ENCODE measurements at regions of chr16 and their contacts with region 1.

Region 1: GRCh38 chr16:361872-362701 is 8.3 kb downstream of the MRPL28 start:
- DNase-seq: peak; percentile 70
- H3K4me3 ChIP-seq: no peak overlapping the region
- H3K27ac ChIP-seq: no peak overlapping the region
- H3K4me1 ChIP-seq: no peaks in the 10 kb centered on the region
- H3K27me3 ChIP-seq: no peaks in the 10 kb centered on the region
- CTCF ChIP-seq: peak; percentile 65 to 83
- POLR2A ChIP-seq: no peak

Region 2: DNA sequence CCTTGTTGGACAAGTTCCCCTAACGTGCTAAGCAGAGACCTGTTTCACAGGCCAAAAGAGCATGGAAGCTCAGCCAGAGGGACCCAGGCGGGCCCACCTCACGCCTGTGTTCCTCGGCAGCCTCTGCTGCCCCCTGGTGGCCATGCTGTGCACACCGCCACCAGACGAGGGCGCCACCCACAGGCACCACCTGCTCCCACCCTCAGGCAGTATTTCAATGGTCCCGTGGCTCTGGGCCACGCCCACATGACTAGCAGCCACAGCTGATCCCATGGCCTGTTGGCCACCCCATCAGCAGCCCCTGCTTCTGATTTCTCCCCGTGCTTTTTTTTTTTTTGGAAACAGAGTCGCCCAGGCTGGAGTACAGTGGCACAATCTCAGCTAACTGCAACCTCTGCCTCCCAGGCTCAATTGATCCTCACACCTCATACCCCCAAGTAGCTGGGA is 265.1 kb before region 1 on chr16:
- CTCF ChIA-PET with region 1: interaction called, 130 read pairs
- POLR2A ChIA-PET with region 1: no interaction called
- dilution Hi-C with region 1: no loop called
- intact Hi-C with region 1: no loop called
- DNase-seq: peak; percentile 87
- H3K4me3 ChIP-seq: no peak overlapping the region
- H3K27ac ChIP-seq: no peak overlapping the region
- H3K4me1 ChIP-seq: no peaks in the 10 kb centered on the region
- H3K27me3 ChIP-seq: no peaks in the 10 kb centered on the region
- CTCF ChIP-seq: peak; percentile 99 to 100
- POLR2A ChIP-seq: peak; percentile 43

Region 3: GRCh38 chr16:117379-118365 is 244.4 kb before region 1 on chr16:
- CTCF ChIA-PET with region 1: interaction called, 16 read pairs
- POLR2A ChIA-PET with region 1: no interaction called
- dilution Hi-C with region 1: no loop called
- intact Hi-C with region 1: no loop called
- DNase-seq: peak; percentile 48
- H3K4me3 ChIP-seq: no peak overlapping the region
- H3K27ac ChIP-seq: no peak overlapping the region
- H3K4me1 ChIP-seq: peaks cover 11% of the 10 kb centered on the region
- H3K27me3 ChIP-seq: no peaks in the 10 kb centered on the region
- CTCF ChIP-seq: peak; percentile 66 to 85
- POLR2A ChIP-seq: no peak

Region 4: DNA sequence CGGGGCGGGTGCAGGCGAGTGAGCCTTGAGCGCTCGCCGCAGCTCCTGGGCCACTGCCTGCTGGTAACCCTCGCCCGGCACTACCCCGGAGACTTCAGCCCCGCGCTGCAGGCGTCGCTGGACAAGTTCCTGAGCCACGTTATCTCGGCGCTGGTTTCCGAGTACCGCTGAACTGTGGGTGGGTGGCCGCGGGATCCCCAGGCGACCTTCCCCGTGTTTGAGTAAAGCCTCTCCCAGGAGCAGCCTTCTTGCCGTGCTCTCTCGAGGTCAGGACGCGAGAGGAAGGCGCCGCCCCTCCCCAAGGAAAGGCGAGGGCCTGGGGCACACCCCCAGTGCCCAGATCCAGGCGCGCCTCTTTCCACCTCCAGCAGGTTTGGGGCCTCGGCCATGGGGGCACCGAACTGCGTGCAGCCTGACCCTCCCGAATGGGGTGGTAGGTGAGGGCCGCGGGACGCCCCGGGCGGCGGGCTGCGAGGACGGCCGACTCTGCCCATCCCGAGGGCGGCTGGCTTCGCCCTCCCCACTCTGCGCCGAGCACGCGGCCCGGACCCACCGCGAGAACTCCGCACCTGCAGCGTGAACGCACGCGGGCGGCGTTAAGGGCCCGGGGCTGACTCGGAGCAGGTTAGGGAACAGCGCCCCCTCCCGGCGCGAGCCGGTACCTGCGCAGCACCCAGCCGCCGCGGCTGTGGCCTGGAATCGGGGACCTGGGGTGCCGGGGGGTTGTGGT is 181.0 kb before region 1 on chr16:
- CTCF ChIA-PET with region 1: interaction called, 13 read pairs
- POLR2A ChIA-PET with region 1: no interaction called
- dilution Hi-C with region 1: no loop called
- intact Hi-C with region 1: no loop called
- DNase-seq: peak; percentile 71
- H3K4me3 ChIP-seq: no peak overlapping the region
- H3K27ac ChIP-seq: no peak overlapping the region
- H3K4me1 ChIP-seq: peaks cover 5% of the 10 kb centered on the region
- H3K27me3 ChIP-seq: peaks cover 19 to 25% of the 10 kb centered on the region in 2 experiments
- CTCF ChIP-seq: peak; percentile 95 to 98
- POLR2A ChIP-seq: peak; percentile 48

Region 5: DNA sequence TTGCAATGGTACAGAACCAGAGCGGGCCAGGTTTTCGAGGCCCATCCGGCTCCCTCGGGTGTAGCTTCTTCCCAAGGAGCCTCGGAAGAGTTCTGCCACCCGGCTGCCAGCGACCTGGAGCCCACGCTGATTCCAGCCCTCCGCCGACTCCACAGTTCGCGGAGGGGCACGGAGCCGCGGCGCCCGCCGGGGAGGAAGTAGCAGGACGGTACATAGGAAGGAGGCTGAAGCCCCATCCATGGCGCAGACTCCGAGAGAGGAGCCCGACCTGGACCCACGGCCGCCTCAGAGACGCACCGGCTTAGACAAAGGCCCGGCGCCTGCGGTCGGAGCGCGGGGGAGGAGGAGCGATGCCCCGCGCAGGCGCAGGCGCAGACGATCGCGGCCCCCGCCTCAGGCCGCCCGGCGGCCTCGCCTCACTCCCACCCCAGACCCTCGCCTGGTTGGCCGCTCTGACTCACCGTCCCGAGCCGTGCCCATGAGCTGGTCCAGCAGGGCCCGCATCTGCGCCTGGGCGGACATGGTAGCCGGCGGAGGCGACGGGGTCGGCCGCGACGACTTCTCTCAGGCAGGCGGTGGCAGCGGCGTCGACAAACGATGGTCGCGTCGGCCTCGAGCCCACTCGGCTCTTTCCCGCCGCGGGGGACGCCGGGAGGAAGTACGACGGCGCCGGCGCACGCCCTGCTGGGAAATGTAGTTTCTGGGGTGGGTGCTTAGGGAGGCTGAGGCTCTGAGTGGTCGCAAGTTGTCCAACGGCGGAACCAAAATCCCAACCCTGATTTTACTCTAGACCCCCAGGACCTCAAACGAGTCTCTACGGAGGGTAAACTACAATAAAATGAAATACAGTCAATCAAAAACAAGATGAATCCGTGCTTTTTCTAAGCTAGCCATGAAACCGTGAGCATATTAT is 133.0 kb before region 1 on chr16 and contains the start of gene LUC7L:
- CTCF ChIA-PET with region 1: interaction called, 26 read pairs
- POLR2A ChIA-PET with region 1: no interaction called
- dilution Hi-C with region 1: no loop called
- intact Hi-C with region 1: no loop called
- DNase-seq: peak; percentile 92
- H3K4me3 ChIP-seq: peak within 1 kb of the TSS; percentile 73 to 76 (median 75)
- H3K27ac ChIP-seq: peak within 1 kb of the TSS; percentile 63
- H3K4me1 ChIP-seq: peaks cover 12% of the 10 kb centered on the region
- H3K27me3 ChIP-seq: no peaks in the 10 kb centered on the region
- CTCF ChIP-seq: no peak
- POLR2A ChIP-seq: peak; percentile 99
- total RNA-seq, gene LUC7L: 86.6 and 94.7 TPM in 2 replicates

Region 6: DNA sequence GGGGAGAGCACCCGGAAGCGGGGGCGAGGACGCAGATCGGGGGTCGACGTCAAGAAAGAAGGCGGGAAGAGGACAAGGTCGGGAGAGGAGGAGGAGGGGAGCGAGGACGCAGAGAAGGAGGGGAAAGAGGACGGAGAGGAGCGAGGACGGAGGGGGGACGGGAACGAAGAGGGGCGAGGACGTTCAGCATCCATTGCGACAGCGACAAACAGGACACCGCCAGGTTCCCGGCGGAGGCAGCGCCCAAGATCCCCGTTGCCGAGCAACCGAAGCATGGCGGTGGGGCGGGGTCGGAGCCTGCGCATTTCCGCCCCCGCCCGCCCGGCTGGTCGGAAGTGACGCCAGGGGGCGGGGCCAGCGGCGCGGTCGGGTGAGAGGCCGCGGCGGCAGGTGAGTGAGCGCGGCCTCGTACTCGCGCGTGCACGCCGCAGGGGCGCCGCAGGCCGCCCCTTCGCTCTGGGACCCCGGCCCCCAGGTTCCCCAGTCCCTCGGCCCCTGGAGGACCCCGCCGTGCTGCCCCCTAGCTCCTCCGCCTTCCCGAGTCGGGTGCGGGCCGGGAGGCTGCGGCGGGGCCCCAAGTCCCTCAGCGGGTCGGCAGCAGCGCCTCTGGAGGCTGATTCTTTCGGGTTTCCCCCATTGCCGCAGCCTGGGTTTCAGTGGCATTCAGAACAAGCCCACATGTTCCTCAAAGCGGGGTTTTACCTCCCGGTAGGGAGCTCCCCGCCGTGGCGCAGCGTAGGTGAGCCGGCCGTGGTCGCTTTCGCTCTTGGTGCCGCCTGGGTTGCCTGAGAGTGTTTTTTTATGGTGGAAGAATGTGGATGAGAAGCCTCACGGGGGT is 127.4 kb before region 1 on chr16 and contains the start of gene FAM234A:
- CTCF ChIA-PET with region 1: interaction called, 26 read pairs
- POLR2A ChIA-PET with region 1: no interaction called
- dilution Hi-C with region 1: no loop called
- intact Hi-C with region 1: no loop called
- DNase-seq: peak; percentile 88
- H3K4me3 ChIP-seq: peak within 1 kb of the TSS; percentile 66 to 75 (median 69)
- H3K27ac ChIP-seq: peak within 1 kb of the TSS; percentile 85
- H3K4me1 ChIP-seq: no peaks in the 10 kb centered on the region
- H3K27me3 ChIP-seq: no peaks in the 10 kb centered on the region
- CTCF ChIP-seq: peak; percentile 37 to 55
- POLR2A ChIP-seq: peak; percentile 97
- total RNA-seq, gene FAM234A: 70.4 and 73.1 TPM in 2 replicates

Region 7: DNA sequence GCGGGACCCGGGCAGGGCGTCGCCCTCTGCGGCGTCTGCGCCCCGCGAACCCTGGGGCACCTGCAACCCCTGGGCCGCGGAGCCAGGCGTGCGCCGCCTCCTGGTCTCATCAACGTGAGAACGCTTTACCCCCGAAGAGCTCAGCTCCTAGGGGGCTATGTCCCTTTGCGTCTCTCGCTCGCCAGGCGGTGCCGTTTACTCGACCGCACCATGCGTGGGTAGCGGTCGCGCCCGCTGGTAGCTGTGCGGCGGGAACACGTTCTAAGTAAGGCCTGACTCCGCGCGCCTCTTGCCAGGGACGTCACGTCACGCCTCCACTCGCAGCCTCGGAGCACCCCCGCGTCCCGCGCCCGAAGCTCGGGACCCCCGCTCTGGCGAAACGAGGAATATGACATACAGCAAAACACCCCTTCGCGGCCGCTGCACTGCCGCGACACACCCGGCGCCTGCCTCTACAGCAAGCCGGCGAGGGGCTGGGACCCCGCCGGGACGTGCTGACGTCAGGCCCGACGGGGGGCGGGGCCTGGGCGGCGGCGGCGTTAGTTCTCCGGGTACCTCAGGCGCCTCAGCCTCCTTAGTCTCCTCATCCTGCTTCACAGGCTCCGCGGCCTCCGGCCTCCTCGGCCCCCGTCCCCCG is 63.1 kb after region 1 on chr16 and contains the start of gene RAB11FIP3:
- CTCF ChIA-PET with region 1: no interaction called
- POLR2A ChIA-PET with region 1: no interaction called
- dilution Hi-C with region 1: no loop called
- intact Hi-C with region 1: no loop called
- DNase-seq: peak; percentile 88
- H3K4me3 ChIP-seq: peak within 1 kb of the TSS; percentile 40 to 81 (median 77)
- H3K27ac ChIP-seq: peak within 1 kb of the TSS; percentile 94
- H3K4me1 ChIP-seq: peaks cover 27% of the 10 kb centered on the region
- H3K27me3 ChIP-seq: no peaks in the 10 kb centered on the region
- CTCF ChIP-seq: peak; percentile 7 to 16
- POLR2A ChIP-seq: peak; percentile 97
- total RNA-seq, gene RAB11FIP3: 64.9 and 75.9 TPM in 2 replicates

Measured in endothelial cell of umbilical vein (primary cell).